Activated CD8-positive, alpha-beta T cell treated with anti-CD3 and anti-CD28 coated beads for 36 hours (primary cell): ENCODE measurements at regions of chr20 and their contacts with region 1.

Region 1: GRCh38 chr20:57622579-57623377 is 2.6 kb upstream of the ZBP1 start:
- DNase-seq: peak; percentile 83
- ATAC-seq: peak; percentile 17
- H3K4me3 Mint-ChIP-seq: no peak overlapping the region
- H3K27ac Mint-ChIP-seq: no peak overlapping the region
- H3K4me1 Mint-ChIP-seq: peaks cover 63% of the 10 kb centered on the region
- H3K27me3 Mint-ChIP-seq: no peaks in the 10 kb centered on the region
- CTCF ChIP-seq: peak; percentile 69

Region 2: DNA sequence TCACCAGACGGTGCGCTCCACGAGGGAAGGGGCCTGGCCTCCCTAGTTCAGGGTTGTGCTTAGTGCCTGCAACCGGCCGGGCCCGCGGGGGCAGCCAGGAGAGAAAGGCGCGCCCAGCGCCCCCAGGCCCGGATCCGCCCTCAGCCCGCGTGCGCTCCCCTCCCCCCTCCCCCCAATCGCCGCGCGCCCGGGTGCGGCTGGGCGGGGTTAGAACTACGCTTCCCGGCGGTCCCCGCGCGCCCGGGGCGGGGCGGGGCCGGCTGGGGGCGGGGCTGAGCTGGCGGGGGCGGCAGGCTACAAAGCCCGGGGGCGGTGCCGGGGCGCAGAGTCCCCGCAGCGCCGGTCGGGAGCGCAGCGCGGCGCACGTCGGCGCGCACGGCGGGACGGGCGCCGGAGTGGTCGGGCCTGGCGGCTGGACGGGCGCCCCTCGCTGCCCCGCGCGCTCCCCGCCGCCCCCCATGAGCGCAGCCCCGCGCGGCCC is 231.7 kb before region 1 on chr20 and contains the start of gene RBM38:
- CTCF ChIA-PET with region 1: interaction called, 3 read pairs
- POLR2A ChIA-PET with region 1: interaction called, 17 read pairs
- intact Hi-C with region 1: no loop called
- DNase-seq: peak; percentile 82
- ATAC-seq: peak; percentile 61
- H3K4me3 Mint-ChIP-seq: peak within 1 kb of the TSS; percentile 84
- H3K27ac Mint-ChIP-seq: peak within 1 kb of the TSS; percentile 99
- H3K4me1 Mint-ChIP-seq: peaks cover 34% of the 10 kb centered on the region
- H3K27me3 Mint-ChIP-seq: no peaks in the 10 kb centered on the region
- CTCF ChIP-seq: no peak
- total RNA-seq, gene RBM38: 114 to 116 TPM

Region 3: DNA sequence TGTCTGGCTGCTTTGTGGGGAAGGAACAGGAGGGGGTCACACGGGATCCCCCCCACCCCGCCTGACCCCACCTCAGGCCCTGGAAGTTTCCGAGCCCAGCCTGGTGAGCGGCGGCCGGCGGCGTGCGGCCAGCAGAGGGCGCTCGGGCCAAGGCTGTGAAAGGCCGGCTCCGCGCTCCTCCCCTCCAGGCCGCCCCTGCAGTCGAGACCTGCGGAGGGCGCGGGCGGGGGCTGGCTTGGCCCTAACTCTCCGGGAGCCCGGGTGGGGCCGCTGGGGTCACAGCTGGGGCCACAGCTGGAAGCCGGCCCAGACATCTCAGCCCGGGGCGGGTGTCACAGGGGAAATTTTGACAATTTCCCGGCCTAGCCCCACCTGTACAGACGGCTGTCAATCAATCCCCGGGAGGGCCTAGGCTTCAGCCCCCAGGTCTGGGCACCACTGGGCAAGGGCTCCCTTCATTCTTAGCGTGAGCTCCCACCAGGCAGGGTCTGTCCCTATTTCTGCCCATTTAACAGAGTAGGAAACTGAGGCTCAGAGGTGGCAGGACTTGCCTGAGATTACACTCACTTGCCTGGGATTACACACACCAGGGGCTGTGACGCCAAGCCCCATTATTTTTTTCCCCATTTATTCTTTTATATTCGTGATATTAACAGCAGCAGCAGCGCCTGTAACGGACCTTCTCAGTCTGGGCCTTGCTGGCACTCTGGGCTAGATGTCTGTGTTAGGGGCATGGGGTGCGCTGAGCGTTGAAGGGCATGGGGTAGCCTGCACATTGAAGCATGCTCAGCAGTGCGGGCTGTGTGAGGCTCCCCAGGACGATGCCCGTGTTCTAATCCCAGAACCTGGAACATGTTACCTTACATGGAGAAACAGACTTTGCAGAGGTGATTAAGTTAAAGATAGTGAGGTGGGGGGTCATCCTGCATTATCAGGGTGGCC is 25.5 kb before region 1 on chr20:
- CTCF ChIA-PET with region 1: interaction called, 15 read pairs
- POLR2A ChIA-PET with region 1: interaction called, 5 read pairs
- intact Hi-C with region 1: no loop called
- DNase-seq: peak; percentile 79
- ATAC-seq: peak; percentile 85
- H3K4me3 Mint-ChIP-seq: no peak overlapping the region
- H3K27ac Mint-ChIP-seq: no peak overlapping the region
- H3K4me1 Mint-ChIP-seq: peaks cover 2% of the 10 kb centered on the region
- H3K27me3 Mint-ChIP-seq: peaks cover 3% of the 10 kb centered on the region
- CTCF ChIP-seq: peak; percentile 97

Region 4: GRCh38 chr20:57638173-57638894 is 15.6 kb after region 1 on chr20:
- CTCF ChIA-PET with region 1: interaction called, 16 read pairs
- POLR2A ChIA-PET with region 1: interaction called, 3 read pairs
- intact Hi-C with region 1: no loop called
- DNase-seq: no peak
- ATAC-seq: no peak
- H3K4me3 Mint-ChIP-seq: no peak overlapping the region
- H3K27ac Mint-ChIP-seq: no peak overlapping the region
- H3K4me1 Mint-ChIP-seq: peaks cover 8% of the 10 kb centered on the region
- H3K27me3 Mint-ChIP-seq: peaks cover 3% of the 10 kb centered on the region
- CTCF ChIP-seq: no peak

Region 5: DNA sequence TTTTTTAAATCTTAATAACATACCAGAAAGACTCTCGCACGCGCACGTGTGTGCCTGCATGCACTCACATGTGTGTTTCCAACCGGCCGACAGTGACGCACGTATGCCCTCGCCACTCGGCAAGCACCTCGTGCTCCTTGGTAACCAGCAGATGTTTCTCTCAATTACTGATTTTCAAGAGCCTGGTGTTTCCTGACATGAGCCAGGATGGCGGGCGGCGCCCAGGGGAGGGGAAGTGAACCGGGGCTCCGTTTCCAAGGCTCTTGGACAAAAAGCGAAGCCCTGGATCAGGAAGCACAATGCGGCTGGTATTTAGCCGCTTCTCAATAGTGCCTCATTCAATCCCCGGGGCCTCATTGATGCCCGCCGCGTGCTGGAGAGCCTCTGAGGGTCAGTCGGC is 49.4 kb after region 1 on chr20:
- CTCF ChIA-PET with region 1: no interaction called
- POLR2A ChIA-PET with region 1: no interaction called
- intact Hi-C with region 1: no loop called
- DNase-seq: no peak
- ATAC-seq: no peak
- H3K4me3 Mint-ChIP-seq: no peak overlapping the region
- H3K27ac Mint-ChIP-seq: no peak overlapping the region
- H3K4me1 Mint-ChIP-seq: peaks cover 20% of the 10 kb centered on the region
- H3K27me3 Mint-ChIP-seq: no peaks in the 10 kb centered on the region
- CTCF ChIP-seq: no peak

Region 6: GRCh38 chr20:57698117-57698866 is 75.5 kb after region 1 on chr20:
- CTCF ChIA-PET with region 1: interaction called, 4 read pairs
- POLR2A ChIA-PET with region 1: no interaction called
- intact Hi-C with region 1: loop called (anchors 5 kb)
- DNase-seq: peak; percentile 90
- ATAC-seq: peak; percentile 99
- H3K4me3 Mint-ChIP-seq: peak overlapping the region; percentile 13
- H3K27ac Mint-ChIP-seq: peak overlapping the region; percentile 69
- H3K4me1 Mint-ChIP-seq: peaks cover 33% of the 10 kb centered on the region
- H3K27me3 Mint-ChIP-seq: no peaks in the 10 kb centered on the region
- CTCF ChIP-seq: no peak